Ascending aorta (tissue), 2 donors: ENCODE measurements at regions of chr1 and their contacts with region 1.

Region 1: GRCh38 chr1:162056043-162056442 is 13.4 kb upstream of the NOS1AP start:
- DNase-seq: peak; percentile 27 to 82
- H3K4me3 ChIP-seq: no peak overlapping the region
- H3K27ac ChIP-seq: no peak overlapping the region
- H3K4me1 ChIP-seq: no peaks in the 10 kb centered on the region
- H3K27me3 ChIP-seq: no peaks in the 10 kb centered on the region
- CTCF ChIP-seq: peak; percentile 85 to 95 (median 87)

Region 2: GRCh38 chr1:161921990-161922389 is 134.1 kb before region 1 on chr1:
- intact Hi-C with region 1: no loop called
- DNase-seq: no peak
- H3K4me3 ChIP-seq: no peak overlapping the region
- H3K27ac ChIP-seq: no peak overlapping the region
- H3K4me1 ChIP-seq: no peaks in the 10 kb centered on the region
- H3K27me3 ChIP-seq: no peaks in the 10 kb centered on the region
- CTCF ChIP-seq: no peak

Region 3: DNA sequence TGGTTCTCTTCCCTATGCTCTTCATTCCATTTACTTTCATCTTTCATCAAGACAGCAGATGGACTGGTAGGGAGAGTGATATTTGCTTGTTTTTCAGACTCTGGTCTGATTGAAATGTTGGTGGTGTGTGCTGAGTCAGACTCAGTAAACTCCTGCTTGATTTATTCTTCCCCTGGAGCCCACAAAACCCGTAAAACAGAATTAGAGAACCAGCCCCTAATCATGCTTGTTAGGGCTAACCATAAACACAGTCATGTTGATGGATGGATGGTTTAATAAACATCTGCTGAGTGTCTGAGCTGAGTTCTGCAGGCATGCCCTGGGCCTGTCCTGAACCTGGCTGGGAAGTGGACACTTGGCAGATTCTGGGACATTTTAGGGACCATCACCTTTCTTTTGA is 38.2 kb after region 1 on chr1:
- intact Hi-C with region 1: no loop called
- DNase-seq: no peak
- H3K4me3 ChIP-seq: no peak overlapping the region
- H3K27ac ChIP-seq: no peak overlapping the region
- H3K4me1 ChIP-seq: peaks cover 0 to 3% of the 10 kb centered on the region in 2 donors
- H3K27me3 ChIP-seq: no peaks in the 10 kb centered on the region
- CTCF ChIP-seq: no peak

Region 4: GRCh38 chr1:162276493-162276892 is 220.4 kb after region 1 on chr1:
- intact Hi-C with region 1: loop called (anchors 1 kb)
- DNase-seq: no peak
- H3K4me3 ChIP-seq: no peak overlapping the region
- H3K27ac ChIP-seq: no peak overlapping the region
- H3K4me1 ChIP-seq: no peaks in the 10 kb centered on the region
- H3K27me3 ChIP-seq: no peaks in the 10 kb centered on the region
- CTCF ChIP-seq: peak in 1 of 3 experiments; percentile 44

Region 5: GRCh38 chr1:162391790-162392563 is 335.9 kb after region 1 on chr1:
- intact Hi-C with region 1: loop called (anchors 1 kb)
- DNase-seq: no peak
- H3K4me3 ChIP-seq: no peak overlapping the region
- H3K27ac ChIP-seq: no peak overlapping the region
- H3K4me1 ChIP-seq: no peaks in the 10 kb centered on the region
- H3K27me3 ChIP-seq: no peaks in the 10 kb centered on the region
- CTCF ChIP-seq: peak; percentile 64 to 76 (median 71)

Region 6: GRCh38 chr1:162497723-162498500 is 441.9 kb after region 1 on chr1 and contains the start of gene UHMK1:
- intact Hi-C with region 1: loop called (anchors 10 kb)
- DNase-seq: peak; percentile 71 to 97
- H3K4me3 ChIP-seq: peak within 1 kb of the TSS; percentile 85 to 99
- H3K27ac ChIP-seq: peak within 1 kb of the TSS; percentile 96 to 97
- H3K4me1 ChIP-seq: peaks cover 4 to 11% of the 10 kb centered on the region in 2 donors
- H3K27me3 ChIP-seq: no peaks in the 10 kb centered on the region
- CTCF ChIP-seq: no peak
- total RNA-seq, gene UHMK1: 13.6 TPM